ENCODE measurements at regions of chr3 and their contacts with region 1.

Region 1: DNA sequence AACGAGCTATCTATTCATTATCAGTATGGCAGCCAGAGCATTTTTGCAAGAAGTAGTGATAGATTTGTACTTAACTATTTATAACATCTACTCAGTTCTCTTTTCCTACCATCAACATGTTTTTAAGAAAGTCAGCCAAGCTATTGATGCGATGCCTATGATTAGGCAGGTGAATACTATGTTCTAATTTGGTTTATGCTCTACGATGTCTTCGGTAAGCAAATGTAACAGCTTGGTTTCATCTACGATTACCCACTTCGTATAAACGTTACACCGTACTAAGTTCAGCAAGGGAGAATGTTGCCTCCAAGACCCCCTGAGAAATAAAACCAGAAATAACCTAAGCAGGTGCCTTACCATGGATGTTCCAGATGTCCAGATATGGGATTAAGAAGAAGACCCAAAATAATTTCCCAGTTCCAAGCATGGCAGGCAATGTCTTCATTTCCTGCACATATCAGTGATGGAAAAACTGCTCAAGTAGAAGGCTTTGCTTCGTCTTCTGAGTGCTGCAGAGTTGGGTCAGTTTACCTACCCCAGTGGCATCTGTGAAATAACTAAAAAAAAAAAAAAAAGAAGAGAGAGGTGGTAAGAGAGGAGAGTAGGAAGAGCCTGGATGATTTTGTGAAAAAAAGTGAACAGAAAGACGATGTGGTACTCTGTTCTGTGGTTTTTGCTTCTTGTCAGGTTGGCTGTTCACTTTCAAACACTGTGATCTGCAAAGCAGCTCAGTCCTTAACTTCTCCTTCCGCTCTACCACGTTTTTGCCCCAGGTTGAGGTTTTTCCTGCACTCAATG is at the start of gene BTLA:
- DNase-seq: no peak
- H3K4me3 Mint-ChIP-seq: peak within 1 kb of the TSS; percentile 98
- H3K27ac Mint-ChIP-seq: peak within 1 kb of the TSS; percentile 94
- H3K4me1 Mint-ChIP-seq: peaks cover 60% of the 10 kb centered on the region
- H3K27me3 Mint-ChIP-seq: no peaks in the 10 kb centered on the region
- total RNA-seq, gene BTLA: 31.1 and 35.7 TPM in 2 replicates

Region 2: DNA sequence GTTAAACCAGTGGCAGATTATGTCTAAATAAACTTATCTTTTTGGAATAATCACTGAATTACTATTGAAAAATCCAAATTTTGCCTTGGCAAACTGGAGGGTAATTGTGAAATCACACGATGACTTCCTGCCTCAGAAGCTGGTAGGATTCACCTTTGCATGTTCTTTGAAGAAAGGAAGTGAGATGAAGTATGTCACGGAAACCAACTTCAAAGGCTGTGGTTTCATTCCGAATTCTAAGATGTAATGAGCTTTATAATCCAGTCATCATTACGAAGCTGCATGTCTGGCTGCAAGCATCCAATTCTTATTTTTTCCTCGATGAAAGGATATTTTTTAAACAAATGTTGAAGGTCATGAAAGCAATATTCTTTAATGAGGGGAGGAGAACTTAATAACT is 888.9 kb before region 1 on chr3:
- intact Hi-C with region 1: loop called (anchors 5 kb)
- DNase-seq: peak; percentile 39
- H3K4me3 Mint-ChIP-seq: peak overlapping the region; percentile 69
- H3K27ac Mint-ChIP-seq: peak overlapping the region; percentile 98
- H3K4me1 Mint-ChIP-seq: peaks cover 93% of the 10 kb centered on the region
- H3K27me3 Mint-ChIP-seq: no peaks in the 10 kb centered on the region

Region 3: GRCh38 chr3:112333381-112334317 is 165.5 kb before region 1 on chr3:
- intact Hi-C with region 1: loop called (anchors 5 kb)
- DNase-seq: peak; percentile 26
- H3K4me3 Mint-ChIP-seq: peak overlapping the region; percentile 90
- H3K27ac Mint-ChIP-seq: peak overlapping the region; percentile 85
- H3K4me1 Mint-ChIP-seq: peaks cover 48% of the 10 kb centered on the region
- H3K27me3 Mint-ChIP-seq: no peaks in the 10 kb centered on the region

Region 4: DNA sequence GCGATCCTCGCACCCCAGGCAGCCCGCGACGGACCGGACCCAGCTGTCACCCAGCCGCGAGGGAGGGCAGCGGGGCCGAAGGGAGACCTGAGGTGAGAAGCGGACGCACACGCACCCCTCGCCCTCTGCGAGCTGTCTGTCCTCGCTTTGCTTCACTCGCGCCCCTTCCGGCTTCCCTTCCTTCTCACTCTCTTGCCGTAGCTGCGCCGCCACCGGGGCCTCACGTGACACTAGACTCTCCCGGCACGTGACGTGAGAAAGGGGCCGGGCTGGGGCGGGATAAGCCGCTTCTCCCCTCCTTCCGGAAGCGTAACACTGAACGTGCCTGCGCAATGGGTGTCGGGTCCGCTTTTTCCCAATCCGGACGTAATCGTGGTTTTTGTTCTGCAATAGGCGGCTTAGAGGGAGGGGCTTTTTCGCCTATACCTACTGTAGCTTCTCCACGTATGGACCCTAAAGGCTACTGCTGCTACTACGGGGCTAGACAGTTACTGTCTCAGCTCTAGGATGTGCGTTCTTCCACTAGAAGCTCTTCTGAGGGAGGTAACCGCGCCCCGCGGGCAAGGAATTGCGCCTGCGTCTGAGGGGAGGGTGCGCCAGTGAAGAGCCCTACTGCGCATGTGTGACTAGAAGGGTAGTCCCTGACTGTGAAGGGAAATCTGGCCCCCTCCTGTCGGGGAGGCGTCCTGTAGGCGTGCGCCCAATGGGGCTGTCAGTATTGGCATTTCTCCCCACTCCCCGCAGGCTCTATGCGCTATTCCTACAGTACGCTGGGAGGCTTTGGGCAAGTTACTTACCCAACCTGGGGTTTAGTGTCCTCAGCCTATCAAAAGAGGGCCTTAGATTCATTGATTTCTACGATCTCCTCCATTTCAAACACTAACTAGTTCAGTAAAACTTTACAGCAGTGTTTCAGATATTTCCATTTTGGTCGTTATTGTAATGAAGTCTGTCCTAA is 62.9 kb after region 1 on chr3 and contains the starts of genes ATG3 and SLC35A5:
- intact Hi-C with region 1: loop called (anchors 5 kb)
- DNase-seq: peak; percentile 98
- H3K4me3 Mint-ChIP-seq: peak within 1 kb of the TSS; percentile 92
- H3K27ac Mint-ChIP-seq: peak within 1 kb of the TSS; percentile 99
- H3K4me1 Mint-ChIP-seq: peaks cover 49% of the 10 kb centered on the region
- H3K27me3 Mint-ChIP-seq: no peaks in the 10 kb centered on the region
- total RNA-seq, gene ATG3: 61.1 and 61.6 TPM in 2 replicates
- total RNA-seq, gene SLC35A5: 12.6 and 17.8 TPM in 2 replicates